ENCODE measurements at regions of chr12 and their contacts with region 1.

Region 1: DNA sequence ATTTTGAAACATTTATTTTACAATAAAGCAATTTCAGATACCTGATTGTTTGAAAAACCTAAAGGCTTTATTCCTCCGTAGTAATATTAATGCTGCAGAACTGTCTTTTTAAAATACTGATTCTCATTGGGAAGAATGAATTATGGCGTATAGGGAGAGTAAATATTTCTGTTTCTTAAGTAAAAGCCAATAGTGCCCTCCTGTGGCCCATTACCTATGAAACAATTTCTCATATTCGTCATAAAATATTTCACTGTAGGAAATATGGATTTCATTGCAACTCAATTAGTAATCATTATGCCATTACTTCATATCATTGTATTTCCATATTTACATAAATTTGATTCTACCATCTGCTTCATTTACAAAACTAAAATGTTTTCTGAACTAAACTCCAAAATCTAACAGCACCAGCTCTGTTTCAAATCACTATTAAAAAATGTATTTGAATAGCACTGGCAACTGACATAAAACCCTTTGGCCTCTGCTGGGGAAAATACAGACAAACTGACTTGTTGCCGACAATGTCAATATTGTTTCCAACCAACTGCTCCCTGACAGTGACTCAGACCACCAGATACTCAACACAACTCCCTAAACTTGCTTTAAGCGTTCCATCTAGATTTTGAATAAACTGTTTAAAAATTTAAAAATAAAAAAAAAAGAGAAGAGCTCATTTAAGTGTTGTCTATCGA is 290.3 kb downstream of the NAV3 start:
- DNase-seq: peak; percentile 63

Region 2: DNA sequence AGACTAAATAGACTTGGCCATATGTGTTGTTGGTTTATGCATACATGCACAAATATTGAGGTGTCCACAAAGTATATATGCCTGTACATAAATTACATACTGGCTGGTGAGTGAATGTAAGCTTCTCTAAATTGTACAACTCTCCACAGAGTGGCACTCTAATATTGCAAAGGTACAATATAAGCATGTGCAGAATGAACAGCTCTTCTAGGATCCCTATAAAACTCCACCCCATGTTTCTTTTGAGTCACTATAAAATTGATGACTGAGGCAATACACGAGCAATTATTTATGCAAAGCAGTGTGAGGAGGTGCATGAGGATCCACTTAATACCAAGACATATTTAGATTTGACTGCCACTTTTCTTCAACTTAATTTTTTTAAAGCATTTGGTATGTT is 118.1 kb before region 1 on chr12:
- in situ Hi-C with region 1: loop called (anchors 25 kb)
- DNase-seq: peak; percentile 37

Measured in SK-MEL-5 (cell line).